Right lobe of liver (tissue), 6 donors: ENCODE measurements at regions of chr1 and their contacts with region 1.

Region 1: GRCh38 chr1:165597883-165598675 is 33.0 kb upstream of the MGST3 start:
- DNase-seq: peak; percentile 98 to 99 (median 98)
- ATAC-seq: peak; percentile 98 to 99 (median 99)
- H3K4me3 ChIP-seq: peak overlapping the region; percentile 41 to 63 (median 60)
- H3K27ac ChIP-seq: peak overlapping the region; percentile 27 to 52 (median 31)
- H3K4me1 ChIP-seq: peaks cover 0 to 9% (median 0%) of the 10 kb centered on the region in 4 donors
- H3K27me3 ChIP-seq: no peaks in the 10 kb centered on the region
- CTCF ChIP-seq: no peak
- POLR2A ChIP-seq: no peak

Region 2: GRCh38 chr1:165257969-165258459 is 340.1 kb before region 1 on chr1:
- intact Hi-C with region 1: loop called in 1 of 2 experiments (anchors 10 kb)
- DNase-seq: peak; percentile 76 to 91 (median 80)
- ATAC-seq: peak; percentile 72 to 81 (median 76)
- H3K4me3 ChIP-seq: no peak overlapping the region
- H3K27ac ChIP-seq: no peak overlapping the region
- H3K4me1 ChIP-seq: peaks cover 0 to 34% (median 12%) of the 10 kb centered on the region in 4 donors
- H3K27me3 ChIP-seq: no peaks in the 10 kb centered on the region
- CTCF ChIP-seq: peak; percentile 79 to 94 (median 82)
- POLR2A ChIP-seq: no peak

Region 3: GRCh38 chr1:165392634-165393571 is 205.2 kb before region 1 on chr1:
- intact Hi-C with region 1: loop called in 1 of 2 experiments (anchors 10 kb)
- DNase-seq: peak; percentile 69 to 75 (median 71)
- ATAC-seq: peak; percentile 95 to 99 (median 96)
- H3K4me3 ChIP-seq: no peak overlapping the region
- H3K27ac ChIP-seq: no peak overlapping the region
- H3K4me1 ChIP-seq: no peaks in the 10 kb centered on the region
- H3K27me3 ChIP-seq: no peaks in the 10 kb centered on the region
- CTCF ChIP-seq: peak; percentile 78 to 93 (median 92)
- POLR2A ChIP-seq: no peak

Region 4: DNA sequence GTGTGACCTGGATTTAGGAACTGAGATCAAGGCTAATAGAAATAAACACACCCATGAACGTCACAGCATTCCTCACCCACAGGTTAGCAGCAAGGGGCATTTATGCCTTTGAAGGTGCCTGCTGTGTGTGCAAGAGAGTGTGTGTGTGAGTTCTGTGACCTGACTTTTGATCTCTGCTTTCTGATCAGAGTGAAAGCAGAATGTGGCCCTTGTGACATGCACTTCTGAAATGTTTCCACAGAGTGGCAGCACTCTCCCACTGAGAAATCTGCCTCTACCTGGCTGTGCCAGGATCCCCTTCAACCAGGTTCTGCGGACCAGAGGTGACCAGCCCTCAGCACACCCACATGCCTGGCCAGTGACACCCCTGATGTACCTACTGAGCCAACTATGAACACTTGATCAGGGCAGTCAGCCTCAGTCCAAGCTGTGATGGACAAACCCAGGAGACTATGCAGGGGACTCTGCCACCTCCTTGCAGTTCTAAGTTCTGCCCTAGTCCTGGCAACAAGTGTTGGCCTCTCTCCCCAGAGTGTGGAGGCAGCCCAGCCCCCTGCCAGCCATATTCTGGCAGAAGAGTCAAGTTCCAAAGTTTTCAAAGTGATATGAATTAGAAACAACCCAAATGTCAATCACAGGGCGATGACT is 194.1 kb before region 1 on chr1:
- intact Hi-C with region 1: loop called (anchors 5 to 10 kb)
- DNase-seq: peak in 2 of 3 donors; percentile 30 to 49
- ATAC-seq: peak; percentile 90 to 96 (median 94)
- H3K4me3 ChIP-seq: no peak overlapping the region
- H3K27ac ChIP-seq: no peak overlapping the region
- H3K4me1 ChIP-seq: no peaks in the 10 kb centered on the region
- H3K27me3 ChIP-seq: no peaks in the 10 kb centered on the region
- CTCF ChIP-seq: peak; percentile 63 to 75 (median 68)
- POLR2A ChIP-seq: no peak

Region 5: GRCh38 chr1:165914136-165914798 is 316.2 kb after region 1 on chr1:
- intact Hi-C with region 1: loop called (anchors 5 to 10 kb)
- DNase-seq: peak in 1 of 3 donors; percentile 66
- ATAC-seq: peak; percentile 58 to 75 (median 68)
- H3K4me3 ChIP-seq: no peak overlapping the region
- H3K27ac ChIP-seq: no peak overlapping the region
- H3K4me1 ChIP-seq: peaks cover 0 to 29% (median 9%) of the 10 kb centered on the region in 4 donors
- H3K27me3 ChIP-seq: no peaks in the 10 kb centered on the region
- CTCF ChIP-seq: peak; percentile 75 to 98 (median 86)
- POLR2A ChIP-seq: no peak